Right ventricle myocardium inferior (tissue), 1 donor: ENCODE measurements at regions of chr12 and their contacts with region 1.

Region 1: DNA sequence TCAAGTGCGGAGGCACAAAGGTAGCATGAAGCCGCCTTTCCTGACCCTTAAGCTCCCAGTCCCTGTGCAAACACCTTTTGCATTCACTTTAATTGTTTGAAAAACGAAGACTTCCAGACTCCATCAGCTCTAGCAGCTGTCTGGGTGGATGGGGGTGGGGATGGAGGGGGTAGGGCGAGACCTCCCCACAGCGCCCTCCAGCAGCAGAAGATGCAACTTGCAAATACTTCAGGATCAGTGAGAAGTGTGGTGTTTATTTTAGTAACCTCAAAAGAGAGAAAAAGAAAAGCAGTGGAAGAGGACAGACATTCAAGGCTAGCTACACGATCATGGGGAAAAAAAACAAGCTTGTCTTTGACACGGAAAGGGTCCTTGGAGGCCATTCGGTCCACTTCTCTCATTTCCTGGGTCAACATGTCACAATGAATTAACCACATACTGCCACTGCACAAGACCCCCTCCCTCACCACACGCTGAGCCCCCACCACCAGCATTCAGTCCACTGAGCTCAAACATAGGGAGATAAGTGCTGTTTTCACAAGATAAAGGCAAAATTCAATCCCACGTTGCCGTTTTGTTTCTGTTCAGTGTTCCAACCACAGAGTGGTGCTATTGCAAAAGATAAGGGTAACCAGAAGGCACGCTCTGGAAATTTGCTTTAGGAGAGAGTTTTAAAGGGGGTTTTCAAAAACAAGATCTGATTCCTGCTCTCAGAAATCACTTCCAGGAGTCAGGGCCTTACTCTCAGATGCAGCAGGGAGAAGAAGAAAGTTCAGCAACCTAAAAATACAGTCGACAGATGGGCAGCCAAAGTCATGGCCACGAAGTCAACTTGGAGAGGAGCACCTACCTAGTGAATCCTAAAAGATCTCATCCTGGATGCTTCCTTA is 3.3 kb upstream of the NTF3 start:
- DNase-seq: no peak
- ATAC-seq: no peak

Region 2: DNA sequence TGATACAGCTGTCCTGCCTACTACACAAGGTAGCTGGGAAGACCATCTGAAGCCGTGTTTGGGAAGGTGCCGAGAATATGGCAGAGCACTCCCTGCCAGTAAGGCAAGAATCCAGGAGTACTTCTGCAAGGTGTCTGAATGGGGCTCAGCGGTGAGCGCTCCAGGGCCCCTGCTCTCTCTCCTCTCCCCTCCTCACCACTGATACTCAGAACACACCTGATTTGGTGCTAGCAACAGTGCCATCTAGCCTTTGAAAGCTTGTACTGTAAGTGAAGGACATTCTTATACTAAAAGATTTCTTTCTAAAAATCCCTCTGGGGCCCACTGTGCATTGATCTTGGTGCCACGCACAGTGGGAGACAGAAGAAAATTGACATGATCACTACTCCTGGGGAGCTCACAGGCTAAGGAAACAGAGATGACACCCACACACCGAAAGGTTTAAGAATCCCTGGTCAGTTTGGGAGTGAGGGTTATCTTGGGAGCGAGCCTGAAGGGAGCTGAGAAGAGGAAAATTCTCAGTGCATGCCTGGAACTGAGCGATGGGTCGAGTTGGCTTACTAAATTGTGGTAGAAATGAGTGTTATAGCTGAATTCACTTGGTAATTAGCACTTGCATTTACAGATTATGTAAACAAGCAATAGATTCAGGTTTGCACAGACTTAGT is 220.2 kb after region 1 on chr12:
- intact Hi-C with region 1: loop called (anchors 5 kb)
- DNase-seq: no peak
- ATAC-seq: peak; percentile 37

Region 3: DNA sequence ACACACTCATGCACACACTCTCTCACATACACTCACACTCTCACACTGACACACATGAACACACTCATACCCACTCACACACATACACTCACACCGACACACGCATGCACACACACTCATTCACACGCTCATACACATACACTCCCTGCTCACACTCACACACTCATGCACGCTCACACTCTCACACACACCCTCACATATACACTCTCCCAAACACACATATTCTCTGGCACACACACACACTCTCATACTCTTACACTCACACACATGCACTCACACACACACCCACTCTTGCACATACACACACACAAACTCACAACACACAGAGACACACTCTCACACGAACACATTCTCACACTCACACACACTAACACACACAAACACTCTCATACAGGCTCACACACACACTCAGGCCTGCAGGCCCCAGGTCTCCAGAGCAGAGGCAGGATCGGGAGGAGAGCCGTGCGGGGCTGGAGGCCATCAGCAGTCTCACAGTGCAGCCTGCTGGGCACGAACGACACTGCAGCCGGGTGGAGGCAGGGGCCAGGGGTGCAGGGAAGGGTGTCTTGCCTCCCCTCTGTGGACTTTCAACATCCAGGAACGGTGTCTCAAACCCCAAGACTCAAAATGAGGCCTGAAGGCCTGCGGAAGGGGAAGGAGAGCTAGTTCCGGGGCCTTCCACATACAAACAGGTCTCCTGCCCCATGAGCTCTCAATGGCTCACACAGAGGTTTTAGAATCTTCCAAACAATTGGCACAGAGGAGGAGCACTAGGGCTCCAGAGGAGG is 367.8 kb after region 1 on chr12:
- intact Hi-C with region 1: loop called (anchors 2 kb)
- DNase-seq: peak; percentile 64
- ATAC-seq: peak; percentile 70